ENCODE measurements at regions of chr12 and their contacts with region 1.

Region 1: GRCh38 chr12:89345830-89346740 is 6.2 kb downstream of the DUSP6 start:
- DNase-seq: peak in 1 of 2 experiments; percentile 75
- H3K4me3 ChIP-seq: peak overlapping the region in 2 of 4 experiments; percentile 3 to 44; a peak in 4 of 8 replicates
- H3K27ac ChIP-seq: no peak overlapping the region
- H3K4me1 ChIP-seq: peaks cover 8 to 29% (median 22%) of the 10 kb centered on the region in 4 experiments
- H3K27me3 ChIP-seq: peaks cover 0 to 17% (median 6%) of the 10 kb centered on the region in 4 experiments; a peak in 6 of 7 replicates
- CTCF ChIP-seq: no peak
- EP300 ChIP-seq: no peak
- POLR2A ChIP-seq: peak in 1 of 2 experiments; percentile 52; a peak in 1 of 3 replicates
- RAD21 ChIP-seq: peak; percentile 14 to 32; a peak in 3 of 4 replicates

Region 2: DNA sequence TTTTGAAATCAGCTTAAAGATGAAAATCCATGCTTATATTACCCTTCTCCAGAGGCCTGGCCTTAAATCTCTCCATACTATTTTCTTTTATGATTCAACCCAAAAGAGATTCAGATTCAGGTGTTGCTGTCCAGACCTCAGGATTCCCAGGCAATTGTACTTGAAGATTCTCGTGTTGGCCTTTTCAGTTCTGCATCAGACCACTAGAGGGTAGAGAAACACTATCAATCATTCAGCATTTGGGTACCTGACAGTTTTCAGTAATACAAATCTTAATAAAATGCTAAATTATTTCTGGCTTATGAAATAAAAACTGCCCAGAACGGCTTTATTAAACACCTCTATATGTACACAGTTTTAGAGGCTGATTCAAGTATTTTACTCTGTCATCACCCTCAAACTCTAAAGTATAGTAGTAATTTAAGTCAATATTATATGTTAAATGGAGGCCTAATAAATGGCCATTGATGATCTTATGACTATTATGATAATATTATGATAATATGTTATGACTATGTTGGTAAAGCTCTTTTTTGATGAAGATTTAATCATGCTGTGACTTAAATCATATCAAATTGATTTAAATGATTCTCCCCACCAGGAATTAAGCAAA is 294.9 kb before region 1 on chr12:
- CTCF ChIA-PET with region 1: interaction called, 11 read pairs
- POLR2A ChIA-PET with region 1: interaction called, 9 read pairs
- DNase-seq: no peak
- H3K4me3 ChIP-seq: no peak overlapping the region
- H3K27ac ChIP-seq: no peak overlapping the region
- H3K4me1 ChIP-seq: no peaks in the 10 kb centered on the region
- H3K27me3 ChIP-seq: no peaks in the 10 kb centered on the region; a peak in 1 of 7 replicates
- CTCF ChIP-seq: peak in 2 of 3 experiments; percentile 63 to 79; a peak in 3 of 4 replicates
- EP300 ChIP-seq: no peak
- POLR2A ChIP-seq: no peak
- RAD21 ChIP-seq: peak; percentile 96 to 97

Region 3: DNA sequence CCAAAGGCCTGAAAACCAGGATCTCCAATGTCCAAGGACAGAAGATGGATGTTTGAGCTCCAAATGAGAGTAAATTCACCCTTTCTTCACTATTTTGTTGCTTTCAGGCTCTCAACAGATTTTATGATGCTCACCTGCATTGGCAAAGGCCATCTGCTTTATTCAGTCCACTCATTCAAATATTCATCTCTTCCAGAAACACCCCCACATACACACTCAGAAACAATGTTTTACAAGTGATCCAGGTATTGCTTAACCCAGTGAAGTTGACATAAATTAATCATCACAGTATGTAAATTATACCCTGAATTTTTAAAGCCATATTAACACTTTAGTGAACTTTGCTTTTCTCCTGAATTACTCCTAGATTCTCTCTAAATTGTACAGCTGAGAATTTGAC is 57.1 kb before region 1 on chr12:
- CTCF ChIA-PET with region 1: no interaction called
- POLR2A ChIA-PET with region 1: no interaction called
- DNase-seq: no peak
- H3K4me3 ChIP-seq: no peak overlapping the region
- H3K27ac ChIP-seq: no peak overlapping the region
- H3K4me1 ChIP-seq: no peaks in the 10 kb centered on the region
- H3K27me3 ChIP-seq: no peaks in the 10 kb centered on the region
- CTCF ChIP-seq: no peak
- EP300 ChIP-seq: no peak
- POLR2A ChIP-seq: no peak
- RAD21 ChIP-seq: no peak

Region 4: DNA sequence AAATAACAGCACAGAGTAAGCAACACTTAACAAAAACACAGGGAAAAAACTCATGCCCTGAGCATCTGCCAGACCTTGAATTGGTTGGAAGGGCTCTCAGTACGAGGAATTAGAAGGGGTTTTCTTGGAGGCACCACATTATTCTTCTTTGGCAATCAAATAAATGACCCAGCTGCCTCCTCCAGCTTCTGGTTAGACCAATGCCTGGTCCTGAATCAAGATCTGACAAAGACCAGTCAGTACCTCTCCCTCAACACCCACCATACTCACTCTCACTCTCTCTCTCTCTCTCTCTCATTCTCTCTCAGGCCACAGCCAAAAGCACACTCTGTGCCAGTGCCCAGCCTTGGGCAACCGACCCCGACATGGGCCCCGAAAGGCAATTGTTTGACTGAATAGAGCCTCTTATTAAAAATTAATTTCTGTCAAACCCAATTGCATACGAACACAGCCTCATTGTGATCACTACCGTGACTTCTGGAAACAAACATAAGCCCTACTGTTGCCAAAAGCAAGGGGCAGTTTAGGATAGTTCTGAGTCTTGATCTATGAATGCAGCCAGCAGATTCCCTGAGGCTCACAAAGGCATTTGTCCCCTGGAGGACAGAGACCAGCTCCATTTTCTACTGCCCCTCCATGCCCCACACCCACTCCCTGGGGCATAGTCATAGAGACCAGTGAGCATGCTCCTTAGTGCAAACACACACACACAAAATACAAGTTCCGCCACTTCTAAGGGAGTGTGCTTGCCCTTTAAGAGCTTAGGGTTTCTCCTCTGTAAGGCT is 17.6 kb before region 1 on chr12:
- CTCF ChIA-PET with region 1: interaction called, 19 read pairs
- POLR2A ChIA-PET with region 1: interaction called, 10 read pairs
- DNase-seq: no peak
- H3K4me3 ChIP-seq: no peak overlapping the region
- H3K27ac ChIP-seq: no peak overlapping the region
- H3K4me1 ChIP-seq: peaks cover 0 to 4% (median under 1%) of the 10 kb centered on the region in 4 experiments; a peak in 2 of 7 replicates
- H3K27me3 ChIP-seq: no peaks in the 10 kb centered on the region
- CTCF ChIP-seq: no peak
- EP300 ChIP-seq: no peak
- POLR2A ChIP-seq: no peak
- RAD21 ChIP-seq: no peak

Region 5: DNA sequence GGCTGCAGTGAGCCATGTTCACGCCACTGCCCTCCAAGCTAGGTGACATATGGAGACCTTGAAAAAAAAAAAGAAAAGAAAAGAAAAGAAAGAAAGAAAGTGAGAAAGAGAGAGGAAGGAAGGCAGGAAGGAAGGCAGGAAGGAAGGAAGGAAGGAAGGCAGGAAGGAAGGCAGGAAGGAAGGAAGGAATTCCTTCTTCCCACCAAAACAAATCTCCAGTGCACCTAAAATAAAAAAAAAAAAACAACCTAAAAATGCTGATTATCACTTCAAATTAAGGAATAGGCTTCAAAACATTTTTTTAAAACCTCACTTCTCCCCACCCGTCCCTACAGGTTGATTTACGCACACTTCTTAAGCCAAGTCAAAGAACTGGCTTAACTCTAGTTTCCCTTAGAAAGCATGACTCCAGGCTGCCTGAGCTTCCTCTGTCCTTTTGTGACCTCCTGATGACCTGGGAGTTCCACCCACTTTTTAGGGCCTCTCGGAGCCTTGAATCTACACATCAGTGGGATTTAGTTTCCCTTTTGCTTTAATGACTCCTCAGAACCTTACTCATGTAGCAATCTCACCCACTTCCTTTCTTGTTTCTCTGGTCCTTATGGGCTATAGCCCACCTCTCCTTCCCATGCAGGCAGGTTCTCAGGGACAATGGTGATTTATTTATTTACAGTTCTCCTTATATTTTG is 12.4 kb before region 1 on chr12:
- CTCF ChIA-PET with region 1: interaction called, 19 read pairs
- POLR2A ChIA-PET with region 1: interaction called, 10 read pairs
- DNase-seq: no peak
- H3K4me3 ChIP-seq: no peak overlapping the region
- H3K27ac ChIP-seq: no peak overlapping the region
- H3K4me1 ChIP-seq: peaks cover 0 to 8% (median 3%) of the 10 kb centered on the region in 4 experiments; a peak in 3 of 7 replicates
- H3K27me3 ChIP-seq: no peaks in the 10 kb centered on the region
- CTCF ChIP-seq: no peak
- EP300 ChIP-seq: no peak
- POLR2A ChIP-seq: no peak
- RAD21 ChIP-seq: no peak

Region 6: DNA sequence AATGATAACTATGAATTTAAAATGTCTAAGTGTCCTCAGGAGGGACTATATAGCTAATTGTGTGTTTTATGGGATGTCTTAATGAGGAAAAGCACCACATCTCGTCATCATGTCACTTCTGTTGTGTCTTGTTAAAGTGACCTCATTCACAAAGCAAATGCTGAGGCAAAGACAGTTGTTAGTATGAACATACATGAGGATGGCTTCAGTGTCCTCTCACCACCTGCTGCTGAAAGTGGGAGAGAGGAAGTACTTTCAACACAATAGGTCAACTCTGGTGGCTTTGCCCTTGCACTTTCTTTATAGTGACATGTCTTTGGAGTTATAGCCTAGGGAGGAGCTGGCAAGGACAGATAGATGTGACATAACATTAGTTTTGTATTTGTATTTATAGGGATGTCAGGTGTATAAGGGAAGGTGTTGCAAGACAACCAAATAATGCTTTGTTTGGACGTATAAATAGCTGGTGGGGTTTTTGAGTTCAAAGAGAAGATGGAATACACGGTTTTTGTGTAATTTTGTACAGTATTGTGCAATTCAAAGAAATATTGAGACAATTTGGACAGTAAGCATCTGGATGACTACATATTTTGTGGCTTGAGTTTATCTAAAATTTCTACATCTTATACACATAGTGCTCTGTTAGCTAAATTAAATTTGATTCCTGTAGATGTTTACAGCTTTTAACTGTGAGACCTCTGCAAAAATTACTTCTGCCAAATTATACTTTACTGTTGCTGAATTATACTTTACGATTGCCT is 494.3 kb after region 1 on chr12:
- CTCF ChIA-PET with region 1: no interaction called
- POLR2A ChIA-PET with region 1: no interaction called
- DNase-seq: no peak
- H3K4me3 ChIP-seq: no peak overlapping the region
- H3K27ac ChIP-seq: no peak overlapping the region
- H3K4me1 ChIP-seq: no peaks in the 10 kb centered on the region
- H3K27me3 ChIP-seq: no peaks in the 10 kb centered on the region
- CTCF ChIP-seq: no peak
- EP300 ChIP-seq: no peak
- POLR2A ChIP-seq: no peak
- RAD21 ChIP-seq: no peak